ENCODE measurements at regions of chr1 and their contacts with region 1.

Region 1: DNA sequence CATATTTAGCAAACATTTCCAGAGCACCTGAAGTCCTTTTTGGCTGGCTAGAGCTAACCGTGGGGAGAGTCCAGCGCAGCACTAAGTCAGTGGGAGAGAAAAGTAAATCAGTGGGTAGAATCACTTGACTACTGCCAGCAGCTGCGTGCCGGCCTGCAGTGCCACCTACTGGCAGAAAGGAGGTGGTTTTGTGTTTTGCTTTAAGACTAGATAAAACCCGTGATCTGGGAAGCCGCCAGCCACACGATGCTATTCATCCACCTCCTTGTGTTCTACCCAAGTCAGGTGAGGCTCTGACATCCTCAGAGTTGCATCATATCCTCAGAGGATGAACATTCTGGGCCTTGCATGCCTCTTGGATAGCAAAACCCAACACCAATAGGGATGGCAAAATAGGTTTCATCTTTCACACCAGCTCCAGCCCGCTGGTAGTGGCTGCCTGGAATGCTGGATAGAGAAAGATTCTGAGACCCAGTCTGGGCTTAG is 14.1 kb upstream of the HEYL start:
- DNase-seq: peak; percentile 94
- H3K4me3 ChIP-seq: peak overlapping the region in 1 of 4 donors; percentile 7
- H3K27ac ChIP-seq: no peak overlapping the region
- H3K4me1 ChIP-seq: peaks cover 3 to 16% (median 9%) of the 10 kb centered on the region in 4 donors
- H3K27me3 ChIP-seq: peaks cover 0 to 10% (median 0%) of the 10 kb centered on the region in 4 donors
- CTCF ChIP-seq: peak; percentile 89 to 95 (median 93)
- EP300 ChIP-seq: no peak
- POLR2A ChIP-seq: no peak

Region 2: DNA sequence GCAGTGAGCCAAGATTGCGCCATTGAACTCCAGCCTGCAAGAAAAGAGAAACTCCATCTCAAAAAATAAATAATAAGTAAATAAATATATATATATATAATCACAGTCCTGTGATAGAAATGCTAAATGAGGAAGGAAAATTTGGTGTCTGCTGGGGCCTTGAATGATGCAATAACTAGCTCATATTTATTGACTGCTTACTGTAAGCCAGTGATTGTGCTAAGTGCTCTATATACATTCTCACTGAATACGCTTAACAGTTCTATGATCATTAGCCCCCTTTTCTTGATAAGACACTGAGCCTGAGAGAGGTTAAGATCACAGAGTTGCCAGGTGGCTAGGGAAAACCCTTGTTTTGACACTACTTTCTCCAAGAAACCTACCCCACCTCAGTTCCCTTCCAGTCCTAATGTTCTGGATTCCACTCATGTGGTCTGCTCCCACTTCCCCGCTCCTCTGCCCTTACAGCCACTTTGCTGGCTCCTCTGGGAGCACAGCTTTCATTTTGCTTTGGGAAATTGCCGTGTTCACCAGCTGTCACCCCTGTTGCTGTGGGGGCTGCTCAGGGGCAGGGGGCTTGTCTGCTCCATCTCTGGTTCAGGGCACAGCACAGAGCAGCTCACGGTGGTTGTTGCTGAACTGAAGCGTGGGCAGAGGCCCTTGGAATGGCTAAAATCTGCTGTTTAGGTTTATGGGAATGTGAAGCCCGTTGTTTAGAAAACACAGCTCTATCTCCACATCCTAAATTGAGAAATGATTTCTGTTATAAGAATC is 164.6 kb before region 1 on chr1:
- intact Hi-C with region 1: no loop called
- DNase-seq: no peak
- H3K4me3 ChIP-seq: no peak overlapping the region
- H3K27ac ChIP-seq: no peak overlapping the region
- H3K4me1 ChIP-seq: peaks cover 6 to 26% (median 19%) of the 10 kb centered on the region in 4 donors
- H3K27me3 ChIP-seq: peaks cover 0 to 38% (median 8%) of the 10 kb centered on the region in 4 donors
- CTCF ChIP-seq: no peak
- EP300 ChIP-seq: no peak
- POLR2A ChIP-seq: no peak

Region 3: GRCh38 chr1:39609618-39610331 is 43.8 kb before region 1 on chr1:
- intact Hi-C with region 1: loop called (anchors 1 kb)
- DNase-seq: no peak
- H3K4me3 ChIP-seq: peak overlapping the region in 1 of 4 donors; percentile 33
- H3K27ac ChIP-seq: peak overlapping the region in 1 of 4 donors; percentile 34
- H3K4me1 ChIP-seq: peaks cover 6 to 14% (median 7%) of the 10 kb centered on the region in 4 donors
- H3K27me3 ChIP-seq: peaks cover 0 to 36% (median 0%) of the 10 kb centered on the region in 4 donors
- CTCF ChIP-seq: peak in 2 of 3 experiments; percentile 55 to 57
- EP300 ChIP-seq: no peak
- POLR2A ChIP-seq: no peak

Region 4: GRCh38 chr1:39720094-39720999 is 66.8 kb after region 1 on chr1:
- intact Hi-C with region 1: loop called (anchors 5 kb)
- DNase-seq: no peak
- H3K4me3 ChIP-seq: no peak overlapping the region
- H3K27ac ChIP-seq: no peak overlapping the region
- H3K4me1 ChIP-seq: peaks cover 0 to 3% (median 0%) of the 10 kb centered on the region in 4 donors
- H3K27me3 ChIP-seq: peaks cover 0 to 35% (median 0%) of the 10 kb centered on the region in 4 donors
- CTCF ChIP-seq: peak; percentile 66 to 79 (median 76)
- EP300 ChIP-seq: no peak
- POLR2A ChIP-seq: no peak

Measured in esophagus muscularis mucosa (tissue), 4 donors.